ENCODE measurements at regions of chr1 and their contacts with region 1.

Region 1: DNA sequence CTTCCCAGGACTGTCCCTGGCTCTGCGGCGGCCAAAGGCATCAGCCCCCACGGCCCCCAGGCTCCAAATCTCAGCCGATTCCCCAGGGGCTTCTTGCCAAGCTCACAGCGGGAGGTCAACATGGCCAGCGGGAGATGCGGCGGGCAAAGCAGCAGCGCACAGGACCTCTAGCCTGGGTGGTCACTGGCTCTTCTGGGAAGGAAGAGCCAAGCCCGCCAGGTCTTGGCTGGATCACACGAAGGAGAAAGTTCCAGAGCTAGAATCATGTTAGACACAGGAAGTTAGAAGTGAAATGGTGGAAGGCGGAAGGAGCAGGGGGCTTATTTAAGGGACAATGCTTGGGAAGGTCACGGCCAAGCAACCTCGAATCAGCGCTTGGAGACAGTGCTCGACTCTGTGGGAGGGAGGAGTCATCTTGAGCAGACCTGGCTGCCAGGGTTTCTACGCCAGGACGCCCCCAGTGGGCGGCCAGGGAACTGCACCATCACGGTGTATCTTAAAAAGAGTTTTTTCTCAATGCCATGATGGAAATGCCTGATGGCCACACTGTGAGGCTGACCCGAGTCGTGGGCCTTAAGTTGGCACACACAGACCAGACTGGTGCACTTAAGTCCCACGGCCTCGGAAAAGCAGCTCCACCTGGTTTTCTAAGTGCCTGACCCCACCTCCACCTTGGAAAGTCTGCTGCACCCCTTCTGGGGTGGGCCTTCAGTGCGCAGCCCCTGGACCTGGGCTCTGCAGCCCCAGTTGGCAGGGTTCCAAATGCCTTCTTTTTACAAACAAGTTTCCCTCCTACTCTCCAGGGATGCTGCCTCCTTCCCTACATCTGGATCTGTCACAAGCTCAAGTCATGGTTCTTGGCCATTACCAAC is 29.3 kb downstream of the SLC66A1 start:
- DNase-seq: peak; percentile 92
- H3K4me3 Mint-ChIP-seq: no peak overlapping the region
- H3K27ac Mint-ChIP-seq: no peak overlapping the region
- H3K4me1 Mint-ChIP-seq: peaks cover 12% of the 10 kb centered on the region
- H3K27me3 Mint-ChIP-seq: no peaks in the 10 kb centered on the region

Region 2: GRCh38 chr1:19274636-19275035 is 66.8 kb before region 1 on chr1:
- intact Hi-C with region 1: no loop called
- DNase-seq: no peak
- H3K4me3 Mint-ChIP-seq: no peak overlapping the region
- H3K27ac Mint-ChIP-seq: no peak overlapping the region
- H3K4me1 Mint-ChIP-seq: no peaks in the 10 kb centered on the region
- H3K27me3 Mint-ChIP-seq: peaks cover 11% of the 10 kb centered on the region

Region 3: DNA sequence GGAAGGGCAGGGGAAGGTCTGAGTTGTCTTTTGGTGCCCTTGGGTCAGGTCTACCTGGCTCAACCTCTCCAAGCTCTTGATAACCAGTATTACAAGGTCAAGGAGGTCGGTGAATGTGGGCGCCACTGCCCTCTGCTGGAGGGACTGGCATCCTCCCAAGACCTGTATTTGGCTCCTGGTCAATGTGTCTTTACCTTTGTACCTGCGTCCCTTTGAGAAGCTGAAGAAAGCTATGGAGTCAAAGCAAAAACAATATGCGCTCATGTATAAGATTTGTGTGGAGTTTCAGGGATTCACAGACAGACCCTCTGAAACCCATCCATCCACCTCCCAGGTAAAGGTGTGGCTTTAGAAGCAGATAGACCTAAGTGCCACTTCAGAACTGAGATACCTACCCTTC is 240.9 kb after region 1 on chr1:
- intact Hi-C with region 1: loop called (anchors 2 kb)
- DNase-seq: peak; percentile 92
- H3K4me3 Mint-ChIP-seq: no peak overlapping the region
- H3K27ac Mint-ChIP-seq: no peak overlapping the region
- H3K4me1 Mint-ChIP-seq: peaks cover 5% of the 10 kb centered on the region
- H3K27me3 Mint-ChIP-seq: peaks cover 2% of the 10 kb centered on the region

Region 4: DNA sequence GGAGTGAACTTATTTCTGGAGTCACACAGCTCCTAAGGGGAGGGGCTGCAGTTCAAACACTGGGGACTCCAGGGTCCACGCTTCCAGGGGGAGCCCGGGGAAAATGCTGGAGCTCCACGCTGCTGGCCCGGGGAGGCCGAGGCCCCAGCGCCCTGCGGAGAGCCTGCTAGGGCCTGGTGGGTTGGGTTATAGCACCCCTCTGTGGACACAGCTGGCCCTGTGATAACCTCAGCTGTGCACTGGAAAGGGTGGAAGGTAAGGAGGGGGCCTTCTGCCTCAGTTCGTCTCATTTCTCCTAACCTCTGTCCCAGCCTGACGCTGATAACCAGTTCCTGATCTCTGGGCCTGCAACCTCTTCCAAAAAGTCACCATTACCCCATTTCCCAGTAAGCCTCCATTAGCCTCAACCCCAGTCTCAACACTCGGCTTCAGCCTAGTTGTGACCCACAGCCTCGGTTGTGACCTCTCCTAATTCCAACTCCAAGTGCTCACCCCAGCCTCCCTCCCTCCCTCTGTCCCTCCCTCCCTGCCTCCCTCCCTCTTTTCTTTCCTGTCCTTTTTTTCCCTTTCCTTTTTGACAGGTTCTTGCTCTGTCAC is 309.8 kb after region 1 on chr1:
- intact Hi-C with region 1: loop called (anchors 2 kb)
- DNase-seq: peak; percentile 83
- H3K4me3 Mint-ChIP-seq: no peak overlapping the region
- H3K27ac Mint-ChIP-seq: no peak overlapping the region
- H3K4me1 Mint-ChIP-seq: peaks cover 31% of the 10 kb centered on the region
- H3K27me3 Mint-ChIP-seq: no peaks in the 10 kb centered on the region

Region 5: DNA sequence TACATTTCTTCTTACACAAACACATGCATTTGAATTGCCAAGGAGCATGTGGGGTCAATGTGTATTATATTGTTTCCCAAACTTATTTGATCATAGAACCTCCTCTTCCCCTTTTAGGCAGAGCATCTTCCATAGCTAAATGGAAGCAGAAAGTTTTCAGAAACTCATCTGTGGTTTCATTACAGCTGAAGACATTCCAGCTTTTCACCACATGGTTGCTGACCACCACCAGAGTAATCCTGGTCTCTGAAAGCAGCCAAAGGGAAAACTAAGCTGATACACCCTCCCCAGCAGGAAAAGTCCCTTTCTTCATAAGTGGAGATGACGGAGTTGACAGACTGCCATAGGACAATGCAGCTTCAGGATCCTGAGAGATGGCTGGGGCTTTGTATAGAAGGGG is 510.6 kb after region 1 on chr1:
- intact Hi-C with region 1: no loop called
- DNase-seq: no peak
- H3K4me3 Mint-ChIP-seq: no peak overlapping the region
- H3K27ac Mint-ChIP-seq: no peak overlapping the region
- H3K4me1 Mint-ChIP-seq: peaks cover 2% of the 10 kb centered on the region
- H3K27me3 Mint-ChIP-seq: peaks cover 12% of the 10 kb centered on the region

Measured in activated CD4-positive, alpha-beta T cell treated with anti-CD3 and anti-CD28 coated beads, Interleukin-2, amount 10 ng/mL, durations not matched to agents 24 days and 14 days (primary cell).